ENCODE measurements at regions of chr4 and their contacts with region 1.

Region 1: GRCh38 chr4:185134307-185134869 is 8.7 kb upstream of the SLC25A4 start:
- DNase-seq: no peak
- H3K4me3 Mint-ChIP-seq: no peak overlapping the region
- H3K27ac Mint-ChIP-seq: no peak overlapping the region
- H3K4me1 Mint-ChIP-seq: no peaks in the 10 kb centered on the region
- H3K27me3 Mint-ChIP-seq: peaks cover 21% of the 10 kb centered on the region

Region 2: DNA sequence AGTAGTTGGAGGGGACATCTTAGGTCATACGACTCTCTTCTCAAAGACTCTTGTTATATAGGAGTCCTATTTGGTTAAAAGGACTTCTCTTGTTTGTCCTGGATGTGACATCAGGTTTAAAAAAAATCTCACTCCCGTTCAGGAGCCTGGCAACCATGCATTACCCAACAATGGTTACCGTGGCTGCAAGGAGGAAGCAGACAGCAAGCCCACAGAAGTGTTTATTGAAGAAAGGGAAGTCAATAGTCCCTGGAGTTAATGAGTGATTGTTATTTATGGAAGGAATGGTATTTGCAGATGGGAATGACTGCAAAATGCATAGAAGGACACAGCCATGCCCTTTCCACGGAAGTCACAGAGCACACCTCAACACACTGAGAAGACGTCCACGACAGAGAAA is 840.8 kb before region 1 on chr4:
- CTCF ChIA-PET with region 1: no interaction called
- intact Hi-C with region 1: no loop called
- DNase-seq: no peak
- H3K4me3 Mint-ChIP-seq: no peak overlapping the region
- H3K27ac Mint-ChIP-seq: no peak overlapping the region
- H3K4me1 Mint-ChIP-seq: peaks cover 23% of the 10 kb centered on the region
- H3K27me3 Mint-ChIP-seq: peaks cover 3% of the 10 kb centered on the region

Region 3: DNA sequence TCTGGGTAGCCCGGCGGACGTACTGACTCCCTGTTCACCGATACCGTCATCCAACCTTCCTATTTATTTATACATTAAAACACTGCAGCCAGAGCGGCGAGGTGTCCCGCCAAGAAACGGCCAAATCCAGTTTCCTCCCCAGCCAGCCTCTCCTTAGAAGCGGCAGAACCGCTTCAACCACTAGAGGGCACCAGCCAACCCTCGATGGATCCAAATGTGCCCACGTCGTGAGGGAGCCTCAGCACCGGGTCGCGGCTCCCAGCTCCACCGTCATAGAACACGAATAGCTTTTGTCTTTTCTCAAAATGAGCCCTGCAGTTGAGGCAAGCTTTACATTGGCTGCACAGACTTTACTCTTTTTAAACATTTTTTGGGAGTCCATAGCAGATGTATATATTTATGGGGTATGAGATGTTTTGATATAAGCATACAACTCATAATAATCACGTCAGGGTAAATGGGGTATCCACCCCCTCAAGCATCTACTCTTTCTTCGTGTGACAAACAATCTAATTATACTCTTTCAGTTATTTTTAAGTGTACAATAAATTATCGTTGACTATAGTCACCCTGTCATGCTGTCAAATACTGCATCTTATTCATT is 129.1 kb before region 1 on chr4:
- CTCF ChIA-PET with region 1: interaction called, 10 read pairs
- intact Hi-C with region 1: loop called (anchors 1 kb)
- DNase-seq: peak; percentile 92
- H3K4me3 Mint-ChIP-seq: peak overlapping the region; percentile 17
- H3K27ac Mint-ChIP-seq: no peak overlapping the region
- H3K4me1 Mint-ChIP-seq: peaks cover 6% of the 10 kb centered on the region
- H3K27me3 Mint-ChIP-seq: peaks cover 28% of the 10 kb centered on the region

Region 4: DNA sequence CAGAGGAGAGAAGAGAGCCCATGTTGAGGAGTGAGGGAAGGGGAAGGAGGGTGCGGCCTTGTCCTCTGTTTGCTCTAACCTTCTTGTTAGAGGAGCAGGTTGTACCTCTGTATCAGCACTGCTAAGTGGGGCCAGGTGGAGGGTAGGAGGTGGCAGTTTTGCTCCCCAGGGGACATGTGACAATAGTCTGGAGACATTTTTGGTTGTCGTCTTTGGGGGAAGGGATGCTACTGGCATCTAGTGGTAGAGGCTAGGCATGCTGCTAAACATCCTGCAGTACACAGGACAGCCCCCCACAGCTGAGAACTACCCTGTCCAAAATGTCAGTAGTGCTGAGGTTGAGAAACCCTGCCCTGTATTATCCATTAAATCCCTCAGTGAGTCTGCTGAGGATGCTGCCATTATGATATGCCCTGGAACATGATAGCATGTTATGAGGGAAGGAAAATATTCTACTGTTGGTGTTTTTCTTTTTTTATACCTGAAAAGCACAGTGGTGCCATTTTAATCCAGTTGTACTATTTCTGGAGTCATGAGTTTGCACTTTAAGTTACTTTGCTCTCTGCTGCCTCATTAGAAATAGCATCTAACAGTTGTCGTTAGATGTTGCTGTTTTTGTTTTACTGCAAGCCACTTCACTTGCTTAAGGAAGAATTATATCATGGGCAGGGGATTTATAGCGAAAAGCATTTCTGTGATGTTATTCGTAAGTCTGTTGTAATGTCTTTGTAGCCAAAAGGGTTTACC is 170.7 kb after region 1 on chr4:
- CTCF ChIA-PET with region 1: interaction called, 5 read pairs
- intact Hi-C with region 1: loop called (anchors 2 kb)
- DNase-seq: peak; percentile 60
- H3K4me3 Mint-ChIP-seq: no peak overlapping the region
- H3K27ac Mint-ChIP-seq: no peak overlapping the region
- H3K4me1 Mint-ChIP-seq: no peaks in the 10 kb centered on the region
- H3K27me3 Mint-ChIP-seq: no peaks in the 10 kb centered on the region

Region 5: GRCh38 chr4:185597532-185598188 is 463.3 kb after region 1 on chr4:
- CTCF ChIA-PET with region 1: interaction called, 3 read pairs
- intact Hi-C with region 1: loop called (anchors 10 kb)
- DNase-seq: peak; percentile 84
- H3K4me3 Mint-ChIP-seq: no peak overlapping the region
- H3K27ac Mint-ChIP-seq: no peak overlapping the region
- H3K4me1 Mint-ChIP-seq: no peaks in the 10 kb centered on the region
- H3K27me3 Mint-ChIP-seq: peaks cover 13% of the 10 kb centered on the region

Measured in activated naive CD4-positive, alpha-beta T cell treated with anti-CD3 and anti-CD28 coated beads for 36 hours (primary cell).